ENCODE measurements at regions of chr13 and their contacts with region 1.

Region 1: GRCh38 chr13:30132623-30133553 is 174.5 kb downstream of the KATNAL1 start:
- DNase-seq: peak; percentile 93 to 98 (median 96)
- ATAC-seq: peak; percentile 88 to 98 (median 96)
- H3K4me3 ChIP-seq: peak overlapping the region in 1 of 12 donors; percentile 3
- H3K27ac ChIP-seq: peak overlapping the region in 1 of 12 donors; percentile 29
- H3K4me1 ChIP-seq: peaks cover 0 to 16% (median 2%) of the 10 kb centered on the region in 12 donors
- H3K27me3 ChIP-seq: no peaks in the 10 kb centered on the region
- CTCF ChIP-seq: peak; percentile 87 to 98 (median 92)
- POLR2A ChIP-seq: no peak

Region 2: DNA sequence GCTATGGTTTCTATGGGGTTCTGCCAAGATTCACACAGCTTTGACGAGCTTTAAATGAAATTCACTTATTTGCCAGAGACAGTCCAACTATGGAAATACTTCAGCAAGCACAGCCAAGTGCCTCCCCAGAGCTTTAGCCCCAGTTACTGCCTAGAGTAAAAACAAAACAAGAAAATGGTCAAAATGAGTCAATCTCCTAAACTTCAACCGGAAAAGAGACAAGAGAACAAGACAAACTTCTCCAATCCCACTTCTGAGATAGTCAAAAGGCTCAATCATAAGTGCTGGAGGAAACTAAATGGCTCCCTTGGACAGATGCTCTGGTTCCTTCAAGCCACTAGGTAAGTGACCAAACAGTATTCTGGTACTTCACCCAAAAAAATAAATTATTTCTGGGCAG is 108.6 kb after region 1 on chr13:
- intact Hi-C with region 1: loop called in 1 of 10 experiments (anchors 10 kb)
- DNase-seq: peak in 1 of 5 donors; percentile 22
- ATAC-seq: no peak
- H3K4me3 ChIP-seq: no peak overlapping the region
- H3K27ac ChIP-seq: peak overlapping the region in 1 of 12 donors; percentile 1
- H3K4me1 ChIP-seq: peaks cover 0 to 6% (median 0%) of the 10 kb centered on the region in 12 donors
- H3K27me3 ChIP-seq: no peaks in the 10 kb centered on the region
- CTCF ChIP-seq: no peak
- POLR2A ChIP-seq: no peak

Region 3: GRCh38 chr13:30334663-30335386 is 201.9 kb after region 1 on chr13:
- intact Hi-C with region 1: loop called in 4 of 10 experiments (anchors 5 to 10 kb)
- DNase-seq: no peak
- ATAC-seq: peak in 1 of 4 donors; percentile 14
- H3K4me3 ChIP-seq: no peak overlapping the region
- H3K27ac ChIP-seq: no peak overlapping the region
- H3K4me1 ChIP-seq: peaks cover 0 to 10% (median 3%) of the 10 kb centered on the region in 12 donors
- H3K27me3 ChIP-seq: no peaks in the 10 kb centered on the region
- CTCF ChIP-seq: peak in 11 of 12 donors; percentile 32 to 64 (median 39)
- POLR2A ChIP-seq: no peak

Region 4: DNA sequence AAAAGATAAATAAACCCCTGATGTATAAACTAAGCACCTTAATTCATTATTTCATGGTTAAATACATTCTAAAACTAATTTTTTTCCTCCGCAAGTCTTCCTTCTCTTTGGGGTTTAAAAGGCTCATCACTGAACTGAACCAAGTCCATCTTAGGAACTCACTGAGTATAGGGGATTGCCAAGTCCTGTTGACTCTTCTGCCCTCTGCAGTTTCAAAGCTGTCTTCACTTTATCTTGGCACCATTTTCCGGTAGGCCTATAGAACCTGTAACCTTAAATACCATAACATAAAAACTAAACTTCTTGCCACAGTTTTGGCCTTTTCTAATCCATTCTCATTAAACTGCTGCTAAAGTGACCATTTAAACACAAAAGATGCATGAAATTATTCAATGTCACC is 418.3 kb after region 1 on chr13:
- intact Hi-C with region 1: loop called in 1 of 10 experiments (anchors 10 kb)
- DNase-seq: no peak
- ATAC-seq: no peak
- H3K4me3 ChIP-seq: no peak overlapping the region
- H3K27ac ChIP-seq: no peak overlapping the region
- H3K4me1 ChIP-seq: no peaks in the 10 kb centered on the region
- H3K27me3 ChIP-seq: no peaks in the 10 kb centered on the region
- CTCF ChIP-seq: peak in 8 of 12 donors; percentile 15 to 36 (median 26)
- POLR2A ChIP-seq: no peak

Region 5: DNA sequence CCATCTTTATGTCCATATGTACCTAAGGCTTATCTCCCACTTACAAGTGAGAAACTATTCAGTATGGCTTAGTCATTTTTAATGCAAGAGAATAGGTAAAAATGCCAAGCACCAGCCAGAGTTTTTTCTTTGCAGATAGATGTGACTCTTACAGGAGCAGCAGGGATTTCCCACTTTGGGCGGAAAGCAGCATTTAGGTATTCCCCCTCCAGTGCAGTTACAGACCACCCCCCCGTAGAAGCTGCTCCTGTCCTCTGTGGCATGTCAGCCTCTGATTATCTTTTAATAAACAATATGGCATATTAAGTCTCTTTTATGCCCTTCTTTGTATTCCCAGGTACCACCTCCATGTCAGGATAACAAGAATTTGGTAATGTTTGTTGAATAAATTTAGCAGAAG is 460.1 kb after region 1 on chr13:
- intact Hi-C with region 1: loop called in 1 of 10 experiments (anchors 10 kb)
- DNase-seq: no peak
- ATAC-seq: no peak
- H3K4me3 ChIP-seq: no peak overlapping the region
- H3K27ac ChIP-seq: no peak overlapping the region
- H3K4me1 ChIP-seq: no peaks in the 10 kb centered on the region
- H3K27me3 ChIP-seq: no peaks in the 10 kb centered on the region
- CTCF ChIP-seq: no peak
- POLR2A ChIP-seq: no peak

Region 6: GRCh38 chr13:30802953-30803478 is 670.1 kb after region 1 on chr13:
- intact Hi-C with region 1: loop called (anchors 2 to 10 kb)
- DNase-seq: peak; percentile 83 to 93 (median 88)
- ATAC-seq: peak; percentile 89 to 98 (median 97)
- H3K4me3 ChIP-seq: peak overlapping the region in 9 of 12 donors; percentile 44 to 66 (median 47)
- H3K27ac ChIP-seq: peak overlapping the region in 3 of 12 donors; percentile 38 to 66 (median 54)
- H3K4me1 ChIP-seq: peaks cover 0 to 35% (median 19%) of the 10 kb centered on the region in 12 donors
- H3K27me3 ChIP-seq: no peaks in the 10 kb centered on the region
- CTCF ChIP-seq: peak; percentile 90 to 98 (median 96)
- POLR2A ChIP-seq: no peak

Region 7: GRCh38 chr13:31044377-31045285 is 911.7 kb after region 1 on chr13:
- intact Hi-C with region 1: loop called in 6 of 10 experiments (anchors 5 to 10 kb)
- DNase-seq: peak; percentile 66 to 88 (median 75)
- ATAC-seq: peak; percentile 81 to 92 (median 84)
- H3K4me3 ChIP-seq: no peak overlapping the region
- H3K27ac ChIP-seq: peak overlapping the region in 2 of 12 donors; percentile 59 to 82
- H3K4me1 ChIP-seq: peaks cover 0 to 32% (median 10%) of the 10 kb centered on the region in 12 donors
- H3K27me3 ChIP-seq: peaks cover 0 to 18% (median 0%) of the 10 kb centered on the region in 9 donors
- CTCF ChIP-seq: peak; percentile 91 to 98 (median 95)
- POLR2A ChIP-seq: no peak

Measured in heart left ventricle (tissue), 16 donors.